Activated T-helper 1 cell treated with anti-CD3 and anti-CD28 coated beads, Interleukin-12 subunit alpha, Interleukin-12 subunit beta, Interleukin-2, Interleukin-4 antibody, amounts not matched to agents 30 ng/mL and 10 ng/mL and 1 ng/mL, durations not matched to agents 14 hours and 24 hours and 36 hours (primary cell): ENCODE measurements at regions of chr3 and their contacts with region 1.

Region 1: GRCh38 chr3:39107388-39108199 is at the starts of genes GORASP1 and TTC21A:
- DNase-seq: peak; percentile 65
- H3K4me3 Mint-ChIP-seq: peak within 1 kb of the TSS; percentile 93
- H3K27ac Mint-ChIP-seq: peak within 1 kb of the TSS; percentile 69
- H3K4me1 Mint-ChIP-seq: peaks cover 53% of the 10 kb centered on the region
- H3K27me3 Mint-ChIP-seq: peaks cover 7% of the 10 kb centered on the region
- total RNA-seq, gene GORASP1: 26.6 and 35.6 TPM in 2 replicates
- total RNA-seq, gene TTC21A: 0.83 and 1.0 TPM in 2 replicates

Region 2: DNA sequence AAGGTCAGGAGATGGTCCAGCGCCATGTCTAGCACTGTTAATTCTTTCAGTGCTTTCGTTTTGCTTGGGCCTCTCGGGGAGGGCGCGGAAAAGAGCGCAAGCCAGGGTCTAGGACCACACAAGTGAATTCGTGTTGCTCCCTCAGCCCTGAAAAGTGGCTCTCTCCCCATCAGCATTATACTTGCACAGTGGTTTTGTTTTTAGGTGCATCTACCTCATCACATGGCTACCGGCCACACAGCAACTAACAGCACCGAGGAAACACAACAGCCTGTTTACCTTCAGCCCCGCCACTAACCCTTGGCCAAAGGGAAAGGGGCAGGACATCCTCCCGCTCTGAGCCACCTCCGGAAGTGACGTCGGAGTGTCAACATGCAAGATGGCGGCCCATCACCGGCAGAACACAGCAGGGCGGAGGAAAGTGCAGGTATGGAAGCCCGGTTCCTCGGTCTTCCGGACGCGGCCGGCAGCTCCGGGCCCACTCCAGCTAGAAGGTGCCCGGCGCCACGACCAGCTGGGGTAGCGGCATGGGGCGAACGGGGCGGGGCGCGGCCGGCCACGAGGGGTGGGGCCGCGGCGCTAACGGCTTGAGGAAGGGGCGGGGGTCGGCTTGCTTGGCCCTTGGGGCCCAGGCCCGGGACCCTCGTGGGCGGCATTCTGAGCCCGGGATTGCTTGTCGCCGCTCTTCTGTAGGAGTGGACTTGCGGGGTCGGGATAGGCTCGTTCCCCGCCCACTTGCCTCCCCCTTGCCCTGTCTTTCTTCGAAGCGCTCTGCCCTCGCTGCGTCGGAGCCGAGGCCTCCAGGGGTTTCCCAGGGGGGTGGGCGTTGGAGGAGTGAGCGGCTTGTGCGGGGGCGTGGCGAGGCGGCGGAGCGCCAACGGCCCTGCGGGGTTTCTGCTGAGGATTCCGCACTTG is 55.7 kb before region 1 on chr3 and contains the starts of genes SCN11A and WDR48:
- intact Hi-C with region 1: loop called (anchors 2 kb)
- DNase-seq: peak; percentile 91
- H3K4me3 Mint-ChIP-seq: peak within 1 kb of the TSS; percentile 93
- H3K27ac Mint-ChIP-seq: peak within 1 kb of the TSS; percentile 95
- H3K4me1 Mint-ChIP-seq: peaks cover 30% of the 10 kb centered on the region
- H3K27me3 Mint-ChIP-seq: no peaks in the 10 kb centered on the region
- total RNA-seq, gene SCN11A: 0.05 TPM in 1 of 2 replicates, not detected in the other
- total RNA-seq, gene WDR48: 40.6 and 41.5 TPM in 2 replicates

Region 3: GRCh38 chr3:39146984-39147591 is 39.5 kb after region 1 on chr3:
- intact Hi-C with region 1: loop called (anchors 1 kb)
- DNase-seq: peak; percentile 64
- H3K4me3 Mint-ChIP-seq: peak overlapping the region; percentile 94
- H3K27ac Mint-ChIP-seq: peak overlapping the region; percentile 97
- H3K4me1 Mint-ChIP-seq: peaks cover 69% of the 10 kb centered on the region
- H3K27me3 Mint-ChIP-seq: no peaks in the 10 kb centered on the region

Region 4: GRCh38 chr3:39383045-39383880 is 275.7 kb after region 1 on chr3 and contains the start of gene SLC25A38:
- intact Hi-C with region 1: loop called (anchors 2 kb)
- DNase-seq: peak; percentile 74
- H3K4me3 Mint-ChIP-seq: peak within 1 kb of the TSS; percentile 94
- H3K27ac Mint-ChIP-seq: peak within 1 kb of the TSS; percentile 97
- H3K4me1 Mint-ChIP-seq: peaks cover 34% of the 10 kb centered on the region
- H3K27me3 Mint-ChIP-seq: no peaks in the 10 kb centered on the region
- total RNA-seq, gene SLC25A38: 40.0 and 43.1 TPM in 2 replicates